ENCODE measurements at regions of chr5 and their contacts with region 1.

Region 1: GRCh38 chr5:15695215-15695731 is 195.3 kb downstream of the FBXL7 start:
- DNase-seq: no peak
- H3K4me3 ChIP-seq: no peak overlapping the region
- H3K27ac ChIP-seq: no peak overlapping the region
- H3K4me1 ChIP-seq: no peaks in the 10 kb centered on the region
- H3K27me3 ChIP-seq: 0 out of 2 replicates have a peak, but pooled peaks cover 3% of the 10 kb centered on the region
- CTCF ChIP-seq: no peak

Region 2: DNA sequence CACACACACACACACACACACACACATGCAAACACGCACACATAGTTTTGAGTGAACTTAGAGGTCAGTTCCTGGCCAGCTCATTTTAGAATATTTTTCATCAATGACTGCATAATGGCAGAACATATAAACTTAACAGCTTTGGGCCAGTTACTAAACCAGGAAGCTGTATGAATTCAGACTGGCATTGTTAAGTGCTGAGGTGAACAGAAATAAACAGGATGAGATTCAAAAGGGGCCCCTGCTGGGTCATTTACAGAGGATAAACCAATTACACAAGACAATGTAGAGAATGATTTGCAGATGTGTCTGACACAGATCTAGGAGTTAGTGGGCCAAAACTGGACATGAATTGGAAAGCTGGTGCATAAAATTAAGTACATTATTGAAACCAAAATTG is 439.7 kb after region 1 on chr5:
- CTCF ChIA-PET with region 1: no interaction called
- POLR2A ChIA-PET with region 1: no interaction called
- intact Hi-C with region 1: loop called (anchors 5 kb)
- DNase-seq: no peak
- H3K4me3 ChIP-seq: no peak overlapping the region
- H3K27ac ChIP-seq: no peak overlapping the region
- H3K4me1 ChIP-seq: no peaks in the 10 kb centered on the region
- H3K27me3 ChIP-seq: peaks cover 17% of the 10 kb centered on the region; the same call in 1 of the 2 replicates
- CTCF ChIP-seq: no peak

Region 3: DNA sequence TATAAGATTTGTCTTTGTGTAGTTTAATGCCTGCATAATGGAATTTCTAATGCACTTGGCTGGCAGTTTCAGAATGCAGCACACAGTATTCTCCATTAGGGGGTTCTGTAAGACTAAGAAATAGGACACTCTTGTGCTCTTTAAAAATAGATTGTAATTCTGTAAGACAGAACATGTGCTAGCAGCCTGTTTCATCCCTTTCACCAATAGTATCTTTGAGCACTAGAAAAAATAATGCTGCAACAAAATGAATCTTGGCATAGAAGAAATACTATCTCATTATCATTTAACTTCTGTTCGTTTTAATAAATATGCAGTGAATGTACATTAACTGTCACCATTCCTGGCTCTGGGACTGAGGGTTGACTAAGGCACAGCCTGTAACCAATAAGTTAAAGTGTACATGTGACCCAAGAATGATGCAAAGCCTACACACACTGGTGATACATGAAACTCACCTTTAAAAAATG is 794.1 kb after region 1 on chr5:
- CTCF ChIA-PET with region 1: no interaction called
- POLR2A ChIA-PET with region 1: no interaction called
- intact Hi-C with region 1: no loop called
- DNase-seq: peak; percentile 41 to 64
- H3K4me3 ChIP-seq: no peak overlapping the region
- H3K27ac ChIP-seq: no peak overlapping the region
- H3K4me1 ChIP-seq: peaks cover 26% of the 10 kb centered on the region
- H3K27me3 ChIP-seq: no peaks in the 10 kb centered on the region
- CTCF ChIP-seq: peak; percentile 88